ENCODE measurements at regions of chr10 and their contacts with region 1.

Region 1: DNA sequence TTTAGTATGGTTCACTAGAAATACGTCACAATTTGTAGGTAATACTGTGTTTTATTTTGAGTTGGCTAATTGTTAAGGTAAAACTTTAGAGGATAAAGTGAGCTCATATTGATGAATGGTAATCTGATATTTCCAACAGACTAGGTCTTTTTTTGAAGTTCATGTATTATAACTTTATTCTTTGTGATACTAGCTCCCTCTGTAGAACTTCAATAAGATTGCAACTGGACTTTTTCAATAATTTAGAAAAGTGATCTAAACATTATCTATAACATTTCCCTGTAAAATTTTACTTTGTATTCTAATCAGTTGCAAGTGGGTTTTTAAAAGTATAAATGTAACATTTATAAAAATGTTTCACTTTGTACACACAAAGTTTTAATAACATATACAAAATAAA is 83.5 kb downstream of the ADK start:
- DNase-seq: peak; percentile 54
- H3K4me3 ChIP-seq: no peak overlapping the region
- H3K27ac ChIP-seq: no peak overlapping the region
- H3K4me1 ChIP-seq: peaks cover 14% of the 10 kb centered on the region
- H3K27me3 ChIP-seq: no peaks in the 10 kb centered on the region

Region 2: DNA sequence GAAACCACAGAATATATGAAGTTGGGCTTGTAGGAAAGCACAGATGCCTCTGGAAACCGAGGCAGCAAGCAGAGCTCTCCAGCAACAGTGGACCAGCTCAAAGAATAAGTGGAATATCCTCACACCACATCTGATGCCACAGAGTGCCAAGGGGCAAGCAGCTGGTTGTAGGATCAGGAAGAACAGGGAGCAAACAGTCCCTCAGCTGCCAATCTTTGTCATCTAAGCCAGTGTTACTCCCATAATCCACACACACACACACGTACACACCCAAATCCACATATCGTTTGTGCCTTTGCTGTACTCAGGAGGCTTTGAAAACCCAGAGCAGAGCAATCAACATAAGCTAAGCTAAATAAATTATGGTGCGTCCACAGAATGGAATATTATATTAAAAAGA is 511.1 kb before region 1 on chr10:
- in situ Hi-C with region 1: no loop called
- DNase-seq: no peak
- H3K4me3 ChIP-seq: no peak overlapping the region
- H3K27ac ChIP-seq: no peak overlapping the region
- H3K4me1 ChIP-seq: 0 out of 2 replicates have a peak, but pooled peaks cover 2% of the 10 kb centered on the region
- H3K27me3 ChIP-seq: no peaks in the 10 kb centered on the region

Region 3: GRCh38 chr10:73759512-73760115 is 475.0 kb before region 1 on chr10:
- in situ Hi-C with region 1: no loop called
- DNase-seq: no peak
- H3K4me3 ChIP-seq: no peak overlapping the region
- H3K27ac ChIP-seq: no peak overlapping the region
- H3K4me1 ChIP-seq: peaks cover 17% of the 10 kb centered on the region
- H3K27me3 ChIP-seq: no peaks in the 10 kb centered on the region

Region 4: DNA sequence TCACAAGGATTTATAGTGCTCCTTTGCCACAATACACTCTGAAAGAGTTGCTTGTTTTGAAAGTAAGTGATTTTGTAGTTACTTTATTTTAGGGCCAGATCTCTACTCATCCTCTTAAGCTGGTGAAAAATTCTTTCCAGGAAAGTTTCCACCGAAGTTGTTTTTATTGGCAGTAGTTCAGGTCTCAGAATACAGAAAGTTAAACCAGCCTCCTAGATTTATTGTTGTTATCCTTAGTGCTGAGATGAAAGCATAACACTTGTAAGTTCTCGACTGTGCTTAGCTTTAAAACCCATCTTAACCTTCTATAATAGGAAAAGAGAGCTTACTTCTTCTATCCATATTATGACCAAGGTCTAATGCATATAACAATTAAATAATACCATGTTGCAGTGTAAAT is 89.4 kb before region 1 on chr10:
- in situ Hi-C with region 1: loop called (anchors 10 kb)
- DNase-seq: peak; percentile 83
- H3K4me3 ChIP-seq: 0 out of 2 replicates have a peak overlapping the region, but pooled peaks have one; percentile 28
- H3K27ac ChIP-seq: peak overlapping the region; percentile 32
- H3K4me1 ChIP-seq: peaks cover 21% of the 10 kb centered on the region
- H3K27me3 ChIP-seq: no peaks in the 10 kb centered on the region

Measured in GM23248 (cell line).